Natural killer cell (primary cell): ENCODE measurements at regions of chr16 and their contacts with region 1.

Region 1: DNA sequence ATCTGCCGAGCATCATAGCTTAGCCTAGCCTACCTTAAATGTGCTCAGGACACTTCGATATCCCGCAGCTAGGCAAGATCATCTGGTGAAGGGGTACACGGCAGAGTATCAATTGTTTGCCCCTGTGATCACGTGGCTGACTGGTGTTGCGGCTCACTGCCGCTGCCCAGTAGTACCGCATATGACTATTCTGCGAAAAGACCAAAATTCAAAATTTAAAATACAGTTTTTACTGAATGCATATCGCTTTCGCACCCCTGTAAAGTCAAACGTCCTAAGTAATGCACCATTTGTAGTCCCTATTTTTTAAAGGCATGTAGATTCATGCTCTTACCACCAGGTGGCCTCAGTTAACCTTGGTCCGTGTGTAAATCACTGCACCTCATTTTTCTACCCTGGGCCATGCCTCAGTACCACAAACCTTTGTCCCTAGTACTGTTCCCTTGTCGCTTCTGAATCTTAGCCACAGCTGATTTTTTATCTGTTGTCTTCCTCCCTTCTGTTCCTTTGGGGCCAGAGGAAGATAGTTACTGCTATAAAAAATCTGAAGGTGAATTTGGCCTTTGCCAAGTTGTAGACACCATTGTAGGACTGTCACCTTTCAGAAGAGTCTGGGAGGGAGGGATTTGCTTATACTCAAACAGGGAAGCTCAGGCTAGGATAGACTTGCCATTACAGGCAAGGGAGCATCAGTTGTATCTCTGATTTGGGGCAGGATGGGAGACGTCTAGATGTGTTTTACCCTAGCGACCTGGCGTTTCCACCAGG is 34.4 kb downstream of the WWP2 start:
- DNase-seq: peak in 1 of 2 donors; percentile 70
- ATAC-seq: peak; percentile 73 to 80 (median 78)
- H3K4me3 ChIP-seq: no peak overlapping the region
- H3K4me3 Mint-ChIP-seq: no peak overlapping the region
- H3K27ac ChIP-seq: no peak overlapping the region
- H3K27ac Mint-ChIP-seq: no peak overlapping the region
- H3K4me1 ChIP-seq: no peaks in the 10 kb centered on the region
- H3K4me1 Mint-ChIP-seq: peaks cover 0 to 8% of the 10 kb centered on the region in 2 donors
- H3K27me3 ChIP-seq: no peaks in the 10 kb centered on the region
- H3K27me3 Mint-ChIP-seq: no peaks in the 10 kb centered on the region
- CTCF ChIP-seq: peak; percentile 91

Region 2: GRCh38 chr16:69930117-69930776 is 133.7 kb after region 1 on chr16:
- intact Hi-C with region 1: loop called (anchors 5 kb)
- DNase-seq: peak; percentile 20 to 75
- ATAC-seq: peak; percentile 60 to 84 (median 72)
- H3K4me3 ChIP-seq: no peak overlapping the region
- H3K4me3 Mint-ChIP-seq: no peak overlapping the region
- H3K27ac ChIP-seq: no peak overlapping the region
- H3K27ac Mint-ChIP-seq: no peak overlapping the region
- H3K4me1 ChIP-seq: no peaks in the 10 kb centered on the region
- H3K4me1 Mint-ChIP-seq: peaks cover 0 to 4% of the 10 kb centered on the region in 2 donors
- H3K27me3 ChIP-seq: no peaks in the 10 kb centered on the region
- H3K27me3 Mint-ChIP-seq: no peaks in the 10 kb centered on the region
- CTCF ChIP-seq: peak; percentile 70